Ascending aorta (tissue), 2 donors: ENCODE measurements at regions of chr14 and their contacts with region 1.

Region 1: DNA sequence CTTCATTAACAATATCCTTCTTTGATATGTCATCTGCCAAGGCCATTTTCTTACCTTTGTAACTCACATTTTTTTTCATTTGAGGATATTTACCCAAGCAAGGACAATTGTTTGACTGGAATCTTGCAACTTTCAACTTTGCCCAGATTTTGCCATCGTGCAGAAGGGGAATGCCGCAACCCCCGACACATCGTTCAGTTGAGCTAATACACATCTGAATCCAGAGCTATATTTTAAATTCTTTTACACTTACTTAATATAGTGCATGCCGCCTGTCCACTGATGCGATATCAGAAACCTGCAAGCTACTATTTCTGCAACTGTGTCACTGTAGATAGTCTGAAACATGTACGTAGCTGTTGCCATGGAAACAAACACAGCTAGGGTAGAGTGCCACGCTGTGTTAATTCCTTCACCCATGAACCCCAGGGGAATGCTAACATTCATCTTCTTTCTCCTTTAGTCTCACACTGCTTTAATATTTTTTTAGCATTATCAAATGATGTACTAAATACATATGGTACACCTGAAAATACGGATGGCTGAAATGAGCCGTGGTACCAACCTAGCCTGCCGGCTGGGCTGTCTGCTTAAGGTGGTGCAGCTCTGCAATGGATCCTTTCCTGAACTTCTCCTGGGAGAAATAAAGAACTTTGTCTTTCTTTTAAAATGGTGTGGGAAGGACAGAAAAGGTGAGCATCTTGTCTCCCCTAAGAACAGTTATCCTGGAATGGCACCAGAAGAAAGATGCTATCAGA is 77.0 kb upstream of the FOXN3 start:
- DNase-seq: no peak
- H3K4me3 ChIP-seq: no peak overlapping the region
- H3K27ac ChIP-seq: no peak overlapping the region
- H3K4me1 ChIP-seq: peaks cover 0 to 7% of the 10 kb centered on the region in 2 donors
- H3K27me3 ChIP-seq: no peaks in the 10 kb centered on the region
- CTCF ChIP-seq: no peak

Region 2: GRCh38 chr14:89371585-89372511 is 122.2 kb before region 1 on chr14:
- intact Hi-C with region 1: no loop called
- DNase-seq: peak in 1 of 2 donors; percentile 40
- H3K4me3 ChIP-seq: no peak overlapping the region
- H3K27ac ChIP-seq: no peak overlapping the region
- H3K4me1 ChIP-seq: peaks cover 0 to 42% of the 10 kb centered on the region in 2 donors
- H3K27me3 ChIP-seq: no peaks in the 10 kb centered on the region
- CTCF ChIP-seq: no peak

Region 3: DNA sequence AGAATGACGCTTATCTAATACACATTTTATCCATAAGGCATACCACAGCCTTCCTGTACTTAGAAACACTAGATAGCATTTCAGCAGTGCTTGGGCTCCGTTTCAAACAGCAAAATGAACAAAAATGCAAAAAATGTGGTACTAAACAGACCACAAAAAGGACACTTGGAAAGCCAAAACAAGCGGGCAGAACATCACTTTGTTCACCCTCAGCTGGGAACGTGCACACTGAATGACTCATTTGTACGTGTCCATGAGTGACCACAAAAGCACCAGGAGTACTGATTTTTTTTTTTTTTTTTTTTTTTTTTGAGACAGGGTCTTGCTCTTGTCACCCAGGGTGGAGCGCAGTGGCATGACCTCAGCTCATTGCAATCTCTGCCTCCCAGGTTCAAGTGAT is 68.1 kb before region 1 on chr14:
- intact Hi-C with region 1: loop called (anchors 5 kb)
- DNase-seq: peak in 1 of 2 donors; percentile 74
- H3K4me3 ChIP-seq: no peak overlapping the region
- H3K27ac ChIP-seq: peak overlapping the region; percentile 86 to 97
- H3K4me1 ChIP-seq: peaks cover 14 to 36% of the 10 kb centered on the region in 2 donors
- H3K27me3 ChIP-seq: no peaks in the 10 kb centered on the region
- CTCF ChIP-seq: no peak

Region 4: GRCh38 chr14:89540830-89541470 is 46.9 kb after region 1 on chr14:
- intact Hi-C with region 1: loop called (anchors 5 kb)
- DNase-seq: no peak
- H3K4me3 ChIP-seq: no peak overlapping the region
- H3K27ac ChIP-seq: no peak overlapping the region
- H3K4me1 ChIP-seq: peaks cover 0 to 2% of the 10 kb centered on the region in 2 donors
- H3K27me3 ChIP-seq: no peaks in the 10 kb centered on the region
- CTCF ChIP-seq: no peak